Stomach (tissue), 19 donors: ENCODE measurements at regions of chr15 and their contacts with region 1.

Region 1: DNA sequence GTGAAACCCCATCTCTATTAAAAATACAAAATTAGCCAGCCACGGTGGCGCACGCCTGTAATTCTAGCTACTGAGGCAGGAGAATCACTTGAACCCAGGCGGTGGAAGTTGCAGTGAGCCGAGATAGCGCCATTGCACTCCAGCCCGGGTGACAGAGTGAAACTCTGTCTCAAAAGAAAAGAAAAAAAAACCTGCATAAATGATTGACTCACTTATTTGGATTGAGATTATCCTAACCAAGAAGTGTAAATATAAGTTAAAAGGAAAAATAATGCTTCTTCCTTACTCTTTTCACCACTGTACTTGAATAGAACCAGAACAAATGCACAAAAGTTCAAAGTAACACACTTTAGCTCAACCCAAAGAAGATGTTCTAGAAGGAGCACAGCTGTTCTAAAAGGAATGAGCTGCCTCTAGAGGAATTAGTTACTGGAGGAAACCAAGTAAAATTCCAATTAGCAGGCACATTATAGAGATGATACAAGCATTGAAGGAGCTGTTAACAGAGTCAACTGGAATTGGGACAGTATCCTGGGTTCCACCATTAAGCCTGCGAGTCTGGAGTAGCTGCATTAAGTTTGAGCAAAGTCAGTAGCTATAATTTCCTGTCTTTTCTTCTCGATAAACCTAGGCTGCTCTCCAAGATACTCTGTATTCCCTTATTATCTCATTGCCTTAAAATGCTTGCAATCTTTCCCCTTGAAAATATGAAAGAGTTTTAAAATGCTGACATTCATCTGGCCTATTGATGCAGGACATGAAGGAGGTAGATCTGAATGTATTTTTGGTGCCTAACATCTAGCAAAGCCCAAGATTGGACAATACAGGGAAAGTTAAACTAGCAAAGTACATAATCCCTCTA is 9.5 kb downstream of the MTHFS start:
- DNase-seq: peak in 1 of 2 donors; percentile 17
- H3K4me3 ChIP-seq: no peak overlapping the region
- H3K27ac ChIP-seq: peak overlapping the region in 4 of 5 donors; percentile 11 to 48 (median 36)
- H3K4me1 ChIP-seq: peaks cover 10 to 44% (median 19%) of the 10 kb centered on the region in 4 donors
- H3K27me3 ChIP-seq: no peaks in the 10 kb centered on the region
- CTCF ChIP-seq: no peak
- EP300 ChIP-seq: no peak
- POLR2A ChIP-seq: no peak

Region 2: DNA sequence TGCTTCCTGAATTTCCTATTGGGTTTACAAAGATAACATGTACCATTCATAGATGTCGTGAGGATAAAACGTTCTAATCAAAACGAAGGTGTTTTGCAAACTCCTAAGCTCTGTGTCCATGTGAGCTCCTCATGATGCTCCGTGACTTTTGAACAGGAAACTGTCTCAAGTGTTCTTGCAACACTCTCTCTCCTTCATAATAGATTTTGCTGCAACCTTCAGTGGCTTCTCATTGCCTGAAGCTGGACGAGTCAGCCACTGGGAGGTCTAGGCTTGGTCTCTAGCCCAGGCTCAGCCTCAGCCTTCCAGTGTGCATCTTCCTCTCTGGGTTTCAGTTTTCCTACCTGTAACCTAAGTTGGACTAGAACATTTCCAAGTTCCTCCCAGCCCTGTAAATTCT is 102.4 kb after region 1 on chr15:
- intact Hi-C with region 1: loop called (anchors 10 kb)
- DNase-seq: no peak
- H3K4me3 ChIP-seq: no peak overlapping the region
- H3K27ac ChIP-seq: peak overlapping the region in 1 of 5 donors; percentile 22
- H3K4me1 ChIP-seq: peaks cover 0 to 7% (median 3%) of the 10 kb centered on the region in 4 donors
- H3K27me3 ChIP-seq: no peaks in the 10 kb centered on the region
- CTCF ChIP-seq: no peak
- EP300 ChIP-seq: no peak
- POLR2A ChIP-seq: no peak